ENCODE measurements at regions of chr10 and their contacts with region 1.

Region 1: GRCh38 chr10:12264204-12264940 is 68.4 kb downstream of the CDC123 start:
- DNase-seq: peak; percentile 85
- H3K4me3 ChIP-seq: peak overlapping the region in 3 of 4 donors; percentile 19 to 56 (median 30)
- H3K27ac ChIP-seq: peak overlapping the region; percentile 69 to 79 (median 71)
- H3K4me1 ChIP-seq: peaks cover 3 to 26% (median 13%) of the 10 kb centered on the region in 4 donors
- H3K27me3 ChIP-seq: no peaks in the 10 kb centered on the region
- CTCF ChIP-seq: peak; percentile 77 to 82 (median 80)
- EP300 ChIP-seq: no peak
- POLR2A ChIP-seq: no peak

Region 2: DNA sequence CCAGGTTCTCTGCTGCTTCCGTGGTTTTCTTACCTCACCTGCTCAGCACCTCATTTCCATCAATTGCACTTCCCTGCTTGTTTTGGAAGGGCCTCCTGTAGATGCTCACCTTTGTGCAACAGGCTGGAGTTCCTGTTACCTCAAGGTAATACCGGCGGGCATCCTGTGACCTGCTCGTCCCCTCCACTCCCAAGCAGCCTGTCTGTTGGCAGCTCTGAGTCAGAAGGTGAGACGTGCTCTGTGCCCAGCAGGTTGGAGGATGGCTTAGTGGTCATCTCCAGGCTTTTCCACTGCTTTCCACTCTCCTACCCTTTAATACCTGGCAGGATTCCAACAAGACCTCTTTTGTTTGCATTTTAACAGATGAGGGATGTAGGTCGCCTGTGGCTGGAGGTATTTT is 171.0 kb after region 1 on chr10:
- in situ Hi-C with region 1: no loop called
- intact Hi-C with region 1: no loop called
- DNase-seq: no peak
- H3K4me3 ChIP-seq: no peak overlapping the region
- H3K27ac ChIP-seq: no peak overlapping the region
- H3K4me1 ChIP-seq: peaks cover 7 to 39% (median 13%) of the 10 kb centered on the region in 4 donors
- H3K27me3 ChIP-seq: no peaks in the 10 kb centered on the region
- CTCF ChIP-seq: no peak
- EP300 ChIP-seq: no peak
- POLR2A ChIP-seq: no peak

Region 3: DNA sequence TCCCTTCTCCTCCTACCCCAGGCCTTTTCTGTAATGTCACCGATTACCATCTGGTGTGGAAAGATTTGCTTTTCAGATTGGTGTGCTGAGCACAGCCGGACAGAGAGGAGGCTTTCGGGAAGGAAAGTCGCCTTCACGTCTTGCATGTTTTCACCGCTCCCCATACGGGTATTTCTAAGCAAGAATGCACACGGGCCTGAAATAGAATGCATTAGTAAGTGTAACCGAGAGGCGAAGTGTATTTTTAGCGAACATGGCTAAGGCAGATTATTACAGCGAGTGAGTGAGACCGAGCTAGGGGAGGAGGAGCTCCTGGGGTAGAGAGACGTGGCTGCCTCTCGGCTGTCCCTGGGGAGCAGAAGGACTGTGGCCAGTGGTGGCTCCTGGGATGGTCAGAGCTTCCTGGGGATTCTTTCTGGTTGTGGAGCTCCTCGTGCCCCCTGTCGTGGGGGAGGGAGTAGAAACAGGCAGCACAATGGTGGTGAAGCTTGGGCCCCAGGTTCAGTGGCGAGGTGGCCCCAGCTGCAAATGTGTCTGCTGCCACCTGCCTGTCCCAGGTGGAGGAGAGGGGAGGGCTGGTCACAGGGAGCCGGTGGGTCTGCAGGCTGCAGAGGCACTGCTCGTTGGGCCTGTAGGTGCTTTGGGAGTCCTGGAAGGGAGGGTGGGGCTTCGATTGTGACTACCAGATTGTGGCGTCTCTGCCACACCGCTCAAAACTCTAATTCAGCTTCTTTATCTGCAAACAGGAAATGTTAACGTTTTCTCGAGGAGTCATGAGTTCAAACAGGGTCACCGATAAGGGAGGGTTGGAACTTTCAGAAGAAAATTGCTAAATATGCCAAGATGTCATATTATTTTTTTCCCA is 220.8 kb after region 1 on chr10:
- in situ Hi-C with region 1: loop called in 2 of 4 experiments (anchors 25 kb)
- intact Hi-C with region 1: no loop called
- DNase-seq: peak; percentile 53
- H3K4me3 ChIP-seq: no peak overlapping the region
- H3K27ac ChIP-seq: peak overlapping the region; percentile 67 to 76 (median 71)
- H3K4me1 ChIP-seq: peaks cover 0 to 35% (median 15%) of the 10 kb centered on the region in 4 donors
- H3K27me3 ChIP-seq: no peaks in the 10 kb centered on the region
- CTCF ChIP-seq: peak in 3 of 5 experiments; percentile 10 to 26 (median 12)
- EP300 ChIP-seq: no peak
- POLR2A ChIP-seq: no peak

Region 4: GRCh38 chr10:12656518-12657142 is 392.3 kb after region 1 on chr10:
- in situ Hi-C with region 1: loop called in 3 of 4 experiments (anchors 10 to 25 kb)
- intact Hi-C with region 1: no loop called
- DNase-seq: no peak
- H3K4me3 ChIP-seq: no peak overlapping the region
- H3K27ac ChIP-seq: no peak overlapping the region
- H3K4me1 ChIP-seq: no peaks in the 10 kb centered on the region
- H3K27me3 ChIP-seq: no peaks in the 10 kb centered on the region
- CTCF ChIP-seq: peak; percentile 68 to 81 (median 70)
- EP300 ChIP-seq: no peak
- POLR2A ChIP-seq: no peak

Region 5: GRCh38 chr10:12710594-12711349 is 446.4 kb after region 1 on chr10:
- in situ Hi-C with region 1: loop called in 3 of 4 experiments (anchors 5 to 10 kb)
- intact Hi-C with region 1: loop called (anchors 1 kb)
- DNase-seq: peak; percentile 83
- H3K4me3 ChIP-seq: no peak overlapping the region
- H3K27ac ChIP-seq: peak overlapping the region; percentile 72 to 81 (median 78)
- H3K4me1 ChIP-seq: peaks cover 28 to 49% (median 39%) of the 10 kb centered on the region in 4 donors
- H3K27me3 ChIP-seq: no peaks in the 10 kb centered on the region
- CTCF ChIP-seq: peak; percentile 87 to 94 (median 90)
- EP300 ChIP-seq: no peak
- POLR2A ChIP-seq: no peak

Region 6: GRCh38 chr10:13074561-13075451 is 810.4 kb after region 1 on chr10:
- in situ Hi-C with region 1: loop called in 2 of 4 experiments (anchors 25 kb)
- intact Hi-C with region 1: no loop called
- DNase-seq: peak; percentile 67
- H3K4me3 ChIP-seq: no peak overlapping the region
- H3K27ac ChIP-seq: no peak overlapping the region
- H3K4me1 ChIP-seq: peaks cover 0 to 3% (median 0%) of the 10 kb centered on the region in 4 donors
- H3K27me3 ChIP-seq: peaks cover 8% of the 10 kb centered on the region
- CTCF ChIP-seq: peak; percentile 61 to 74 (median 72)
- EP300 ChIP-seq: no peak
- POLR2A ChIP-seq: no peak

Region 7: DNA sequence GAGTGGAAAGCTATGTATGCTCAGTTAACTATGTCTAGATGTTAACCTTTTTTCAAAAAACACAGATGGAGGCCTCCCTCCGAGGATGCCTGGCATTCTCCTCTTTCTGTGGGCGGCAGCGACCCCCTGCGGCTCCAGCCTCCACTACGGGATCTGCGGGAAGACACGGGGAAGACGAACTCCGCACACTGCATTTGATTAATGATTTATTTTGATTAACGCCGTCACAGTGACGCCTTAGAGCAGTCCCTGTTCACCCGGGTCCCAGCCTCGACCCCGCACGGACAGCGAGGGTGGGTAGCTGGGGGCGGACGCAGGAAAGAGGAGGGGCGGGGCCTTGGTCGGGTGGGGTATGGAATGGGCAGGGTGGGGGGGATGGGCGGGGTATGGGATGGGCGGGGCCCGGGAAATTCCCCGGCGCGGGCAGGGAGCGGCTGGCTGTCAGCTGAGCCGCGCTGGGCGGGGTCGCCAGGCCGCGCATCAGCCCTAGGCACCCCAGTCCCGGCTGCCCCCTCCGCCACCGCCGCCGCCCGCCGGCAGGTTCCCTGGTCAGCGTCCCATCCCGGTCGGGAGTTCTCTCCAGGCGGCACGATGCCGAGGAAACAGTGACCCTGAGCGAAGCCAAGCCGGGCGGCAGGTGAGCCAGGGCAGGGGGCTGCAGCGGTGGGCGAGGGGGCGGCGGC is 835.4 kb after region 1 on chr10 and contains the start of gene OPTN:
- in situ Hi-C with region 1: loop called in 1 of 4 experiments (anchors 25 kb)
- intact Hi-C with region 1: no loop called
- DNase-seq: peak; percentile 84
- H3K4me3 ChIP-seq: peak within 1 kb of the TSS; percentile 50 to 95 (median 78)
- H3K27ac ChIP-seq: peak within 1 kb of the TSS; percentile 91 to 99 (median 93)
- H3K4me1 ChIP-seq: peaks cover 3 to 30% (median 16%) of the 10 kb centered on the region in 4 donors
- H3K27me3 ChIP-seq: no peaks in the 10 kb centered on the region
- CTCF ChIP-seq: peak; percentile 43 to 63 (median 58)
- EP300 ChIP-seq: no peak
- POLR2A ChIP-seq: peak; percentile 80
- total RNA-seq, gene OPTN: 39.2 to 74.8 (median 66.3) TPM